Testis (tissue), 5 donors: ENCODE measurements at regions of chr14 and their contacts with region 1.

Region 1: GRCh38 chr14:69242311-69243224 is 17.4 kb upstream of the GALNT16 start:
- DNase-seq: peak; percentile 80
- H3K4me3 ChIP-seq: no peak overlapping the region
- H3K27ac ChIP-seq: peak overlapping the region in 1 of 2 donors; percentile 19
- H3K4me1 ChIP-seq: peaks cover 6% of the 10 kb centered on the region
- H3K27me3 ChIP-seq: no peaks in the 10 kb centered on the region
- CTCF ChIP-seq: peak; percentile 70 to 75 (median 74)
- POLR2A ChIP-seq: no peak

Region 2: DNA sequence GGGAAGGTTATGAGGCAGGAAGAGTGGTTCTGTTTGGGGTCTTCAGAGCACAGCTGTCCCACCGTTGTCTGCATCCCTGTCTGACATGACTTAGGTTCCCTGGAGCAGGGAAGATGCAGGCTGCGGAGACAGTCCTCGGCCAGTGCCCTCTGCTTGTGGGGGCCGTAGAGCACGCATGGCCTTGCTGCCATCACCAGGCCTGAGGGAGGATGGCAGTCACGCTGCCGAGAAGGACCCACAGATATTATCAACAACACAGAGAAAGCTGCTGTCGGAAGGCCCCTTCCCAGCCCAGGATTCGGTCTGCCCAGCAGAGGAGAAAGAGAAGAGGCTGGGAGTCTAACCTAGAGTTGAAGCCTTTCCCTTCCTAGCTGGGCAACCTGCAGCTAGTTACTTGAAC is 120.5 kb after region 1 on chr14:
- intact Hi-C with region 1: loop called (anchors 10 kb)
- DNase-seq: peak; percentile 55
- H3K4me3 ChIP-seq: no peak overlapping the region
- H3K27ac ChIP-seq: no peak overlapping the region
- H3K4me1 ChIP-seq: no peaks in the 10 kb centered on the region
- H3K27me3 ChIP-seq: no peaks in the 10 kb centered on the region
- CTCF ChIP-seq: peak in 2 of 3 experiments; percentile 36 to 41
- POLR2A ChIP-seq: no peak

Region 3: GRCh38 chr14:69459122-69459521 is 216.6 kb after region 1 on chr14:
- intact Hi-C with region 1: loop called (anchors 10 kb)
- DNase-seq: no peak
- H3K4me3 ChIP-seq: no peak overlapping the region
- H3K27ac ChIP-seq: no peak overlapping the region
- H3K4me1 ChIP-seq: no peaks in the 10 kb centered on the region
- H3K27me3 ChIP-seq: no peaks in the 10 kb centered on the region
- CTCF ChIP-seq: no peak
- POLR2A ChIP-seq: no peak